Activated CD4-positive, alpha-beta T cell treated with anti-CD3 and anti-CD28 coated beads for 36 hours (primary cell): ENCODE measurements at regions of chr11 and their contacts with region 1.

Region 1: GRCh38 chr11:69352715-69353325 is 58.9 kb downstream of the MYEOV start:
- DNase-seq: peak; percentile 75
- ATAC-seq: peak; percentile 97
- H3K4me3 Mint-ChIP-seq: no peak overlapping the region
- H3K27ac Mint-ChIP-seq: no peak overlapping the region
- H3K4me1 Mint-ChIP-seq: peaks cover 9% of the 10 kb centered on the region
- H3K27me3 Mint-ChIP-seq: no peaks in the 10 kb centered on the region

Region 2: DNA sequence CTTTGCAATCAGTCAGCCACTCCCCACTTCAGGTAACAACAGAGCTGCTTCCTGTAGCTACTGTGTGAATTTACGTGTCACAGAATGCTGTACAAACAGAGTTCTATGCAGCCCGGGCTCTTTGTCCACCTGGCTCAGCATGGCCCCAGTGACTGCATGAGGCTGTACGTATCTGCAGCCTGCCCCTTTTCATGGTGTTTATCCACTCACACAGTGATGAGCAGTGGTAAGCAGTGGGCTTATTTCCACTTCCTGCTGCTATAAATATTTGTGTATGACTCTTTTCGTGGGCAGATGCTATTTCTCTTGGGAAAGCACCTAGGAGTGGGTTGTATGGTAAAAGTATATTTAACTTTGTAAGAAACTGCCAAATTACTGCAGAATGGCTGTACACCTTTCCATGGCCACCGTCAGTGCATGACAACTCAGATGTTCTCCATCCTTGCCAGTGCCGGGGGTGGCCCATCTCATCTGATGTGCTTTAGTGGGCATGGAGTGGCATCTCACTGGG is 15.6 kb before region 1 on chr11:
- CTCF ChIA-PET with region 1: interaction called, 4 read pairs
- POLR2A ChIA-PET with region 1: no interaction called
- intact Hi-C with region 1: loop called in 1 of 2 experiments (anchors 2 kb)
- DNase-seq: peak; percentile 63
- ATAC-seq: peak; percentile 87
- H3K4me3 Mint-ChIP-seq: peak overlapping the region; percentile 15
- H3K27ac Mint-ChIP-seq: peak overlapping the region; percentile 70
- H3K4me1 Mint-ChIP-seq: peaks cover 36% of the 10 kb centered on the region
- H3K27me3 Mint-ChIP-seq: no peaks in the 10 kb centered on the region